PC-9 (cell line): ENCODE measurements at regions of chr12 and their contacts with region 1.

Region 1: GRCh38 chr12:7514416-7514815 is 10.8 kb upstream of the CD163 start:
- DNase-seq: no peak
- H3K4me3 ChIP-seq: no peak overlapping the region
- H3K27ac ChIP-seq: no peak overlapping the region
- H3K4me1 ChIP-seq: no peaks in the 10 kb centered on the region
- H3K27me3 ChIP-seq: no peaks in the 10 kb centered on the region
- CTCF ChIP-seq: no peak

Region 2: GRCh38 chr12:7747246-7747645 is 232.8 kb after region 1 on chr12 and contains the start of gene CLEC4C:
- CTCF ChIA-PET with region 1: interaction called, 12 read pairs
- POLR2A ChIA-PET with region 1: no interaction called
- intact Hi-C with region 1: no loop called
- DNase-seq: no peak
- H3K4me3 ChIP-seq: no peak within 1 kb of the TSS
- H3K27ac ChIP-seq: no peak within 1 kb of the TSS
- H3K4me1 ChIP-seq: no peaks in the 10 kb centered on the region
- H3K27me3 ChIP-seq: no peaks in the 10 kb centered on the region
- CTCF ChIP-seq: no peak
- total RNA-seq, gene CLEC4C: not detected in 2 replicates